ENCODE measurements at regions of chr1 and their contacts with region 1.

Region 1: GRCh38 chr1:167627865-167628641 is 2.0 kb upstream of the RCSD1 start:
- DNase-seq: peak; percentile 89
- ATAC-seq: peak; percentile 83
- H3K4me3 Mint-ChIP-seq: peak overlapping the region; percentile 98
- H3K27ac Mint-ChIP-seq: peak overlapping the region; percentile 91
- H3K4me1 Mint-ChIP-seq: peaks cover 66% of the 10 kb centered on the region
- H3K27me3 Mint-ChIP-seq: no peaks in the 10 kb centered on the region

Region 2: GRCh38 chr1:167617153-167618147 is 10.6 kb before region 1 on chr1:
- CTCF ChIA-PET with region 1: interaction called, 10 read pairs
- POLR2A ChIA-PET with region 1: interaction called, 47 read pairs
- DNase-seq: peak; percentile 45
- ATAC-seq: peak; percentile 86
- H3K4me3 Mint-ChIP-seq: peak overlapping the region; percentile 68
- H3K27ac Mint-ChIP-seq: peak overlapping the region; percentile 95
- H3K4me1 Mint-ChIP-seq: peaks cover 58% of the 10 kb centered on the region
- H3K27me3 Mint-ChIP-seq: no peaks in the 10 kb centered on the region

Measured in activated CD8-positive, alpha-beta T cell treated with anti-CD3 and anti-CD28 coated beads, Interleukin-2, amount 10 ng/mL, durations not matched to agents 7 days and 5 days (primary cell).